AG04449 (cell line): ENCODE measurements at regions of chr7 and their contacts with region 1.

Region 1: DNA sequence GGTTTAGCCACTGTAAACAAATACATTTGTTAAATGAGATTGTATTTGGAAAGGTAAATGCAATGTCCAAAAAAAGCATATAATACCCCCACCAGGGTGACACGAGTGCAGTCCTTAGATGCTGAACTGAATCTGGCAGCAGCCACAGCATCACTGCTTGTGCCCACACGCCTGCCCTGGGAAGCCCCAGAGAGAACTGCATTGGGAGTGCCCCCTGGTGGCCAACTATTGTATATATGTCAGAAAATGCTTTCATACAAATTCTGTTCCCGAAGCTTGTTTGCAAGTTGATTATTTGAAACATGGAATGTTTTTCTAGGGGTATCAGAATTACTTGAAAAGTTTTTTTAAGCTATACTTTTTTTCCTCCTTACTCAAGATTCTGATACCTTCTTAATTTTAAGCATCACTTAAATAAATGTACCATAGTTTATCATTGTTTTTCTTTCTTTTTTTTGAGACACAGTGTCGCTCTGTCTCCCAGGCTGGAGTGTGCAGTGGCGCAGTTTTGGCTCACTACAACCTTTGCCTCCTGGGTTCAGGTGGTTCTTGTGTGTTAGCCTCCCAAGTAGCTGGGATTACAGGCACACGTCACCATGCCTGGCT is 50.1 kb downstream of the LANCL2 start:
- DNase-seq: peak; percentile 23
- H3K4me3 ChIP-seq: no peak overlapping the region
- CTCF ChIP-seq: peak; percentile 71

Region 2: GRCh38 chr7:55271069-55271626 is 144.1 kb before region 1 on chr7:
- CTCF ChIA-PET with region 1: interaction called, 248 read pairs
- POLR2A ChIA-PET with region 1: no interaction called
- DNase-seq: no peak
- H3K4me3 ChIP-seq: no peak overlapping the region
- CTCF ChIP-seq: peak; percentile 56

Region 3: GRCh38 chr7:55288070-55288824 is 127.0 kb before region 1 on chr7:
- CTCF ChIA-PET with region 1: interaction called, 248 read pairs
- POLR2A ChIA-PET with region 1: no interaction called
- DNase-seq: no peak
- H3K4me3 ChIP-seq: no peak overlapping the region
- CTCF ChIP-seq: no peak

Region 4: GRCh38 chr7:55309040-55309991 is 106.0 kb before region 1 on chr7:
- CTCF ChIA-PET with region 1: interaction called, 20 read pairs
- POLR2A ChIA-PET with region 1: interaction called, 3 read pairs
- DNase-seq: no peak
- H3K4me3 ChIP-seq: no peak overlapping the region
- CTCF ChIP-seq: no peak

Region 5: GRCh38 chr7:55369427-55370400 is 45.6 kb before region 1 on chr7:
- CTCF ChIA-PET with region 1: interaction called, 30 read pairs
- POLR2A ChIA-PET with region 1: no interaction called
- DNase-seq: peak; percentile 83
- H3K4me3 ChIP-seq: peak overlapping the region; percentile 19; the same call in 1 of the 2 replicates
- CTCF ChIP-seq: no peak

Region 6: DNA sequence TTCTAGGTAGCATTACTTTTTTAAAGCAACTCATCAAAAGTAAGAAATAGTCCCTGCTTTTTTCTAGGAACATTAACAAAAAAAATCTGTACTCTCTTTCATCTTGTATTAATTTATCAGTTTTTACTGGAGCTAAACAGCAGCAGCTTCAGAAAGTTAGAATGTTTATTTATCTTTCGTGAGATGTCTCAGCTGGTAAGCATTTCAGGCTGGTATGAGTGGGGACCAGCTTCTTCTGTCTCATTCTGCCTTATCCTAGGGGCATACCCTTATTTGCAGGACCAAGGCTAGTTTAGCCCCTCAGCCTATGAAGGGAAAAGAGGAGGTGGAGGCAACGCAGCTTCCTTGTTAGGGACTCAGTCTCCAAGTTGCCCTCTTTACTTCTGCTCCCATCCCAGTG is 15.1 kb before region 1 on chr7:
- CTCF ChIA-PET with region 1: interaction called, 25 read pairs
- POLR2A ChIA-PET with region 1: no interaction called
- DNase-seq: no peak
- H3K4me3 ChIP-seq: no peak overlapping the region
- CTCF ChIP-seq: no peak

Region 7: GRCh38 chr7:55432939-55433784 is 17.9 kb after region 1 on chr7:
- CTCF ChIA-PET with region 1: interaction called, 89 read pairs
- POLR2A ChIA-PET with region 1: no interaction called
- DNase-seq: no peak
- H3K4me3 ChIP-seq: no peak overlapping the region
- CTCF ChIP-seq: peak; percentile 39

Region 8: DNA sequence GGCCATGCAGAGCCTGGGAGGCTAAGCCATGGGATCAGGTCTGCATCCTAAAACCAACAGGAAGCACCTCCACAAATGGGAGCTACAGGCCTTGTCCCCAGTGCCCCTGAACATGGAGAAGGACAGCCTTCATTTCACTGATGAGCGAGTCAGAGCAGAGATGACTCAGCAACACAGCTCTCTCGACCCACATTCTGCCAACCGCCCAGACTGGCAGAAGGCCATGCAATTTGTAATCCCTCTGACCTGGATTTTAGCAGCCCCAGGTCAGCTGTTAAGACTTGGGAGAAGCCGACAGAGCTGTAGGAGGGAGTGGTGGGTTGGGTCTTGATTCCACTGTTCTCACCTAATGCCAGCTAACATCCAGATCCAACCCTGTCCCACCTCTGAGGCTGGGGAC is 131.6 kb after region 1 on chr7:
- CTCF ChIA-PET with region 1: no interaction called
- POLR2A ChIA-PET with region 1: no interaction called
- DNase-seq: peak; percentile 47
- H3K4me3 ChIP-seq: no peak overlapping the region
- CTCF ChIP-seq: no peak